ENCODE measurements at regions of chr15 and their contacts with region 1.

Region 1: DNA sequence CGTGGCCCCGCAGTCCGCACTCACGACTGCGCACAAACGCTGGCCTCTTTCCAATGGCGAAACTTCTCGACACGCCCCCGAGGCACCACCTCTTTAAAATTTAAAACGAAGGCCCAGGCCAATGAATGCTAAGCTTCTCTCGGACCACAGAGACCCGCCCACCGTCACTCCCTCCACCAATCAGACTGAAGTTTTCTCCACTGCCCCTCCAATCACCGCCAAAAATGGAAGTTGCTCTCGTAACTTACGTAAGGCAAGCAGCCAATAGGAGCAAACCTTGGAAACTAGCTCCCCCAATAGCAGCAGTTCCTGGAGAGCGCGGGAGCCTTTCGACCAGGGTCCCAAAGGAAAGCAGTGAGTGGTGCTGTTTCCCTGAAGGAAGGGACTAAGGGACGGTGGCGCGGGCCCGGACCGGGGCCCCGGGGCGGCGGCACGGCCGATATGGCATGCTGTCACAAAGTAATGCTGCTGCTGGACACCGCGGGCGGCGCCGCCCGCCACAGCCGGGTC is at the start of gene TICRR:
- DNase-seq: peak; percentile 100
- H3K4me3 ChIP-seq: peak within 1 kb of the TSS; percentile 82
- H3K27ac ChIP-seq: peak within 1 kb of the TSS; percentile 90
- H3K4me1 ChIP-seq: peaks cover 12% of the 10 kb centered on the region
- H3K27me3 ChIP-seq: no peaks in the 10 kb centered on the region
- CTCF ChIP-seq: no peak
- total RNA-seq, gene TICRR: 55.7 and 56.5 TPM in 2 replicates

Region 2: DNA sequence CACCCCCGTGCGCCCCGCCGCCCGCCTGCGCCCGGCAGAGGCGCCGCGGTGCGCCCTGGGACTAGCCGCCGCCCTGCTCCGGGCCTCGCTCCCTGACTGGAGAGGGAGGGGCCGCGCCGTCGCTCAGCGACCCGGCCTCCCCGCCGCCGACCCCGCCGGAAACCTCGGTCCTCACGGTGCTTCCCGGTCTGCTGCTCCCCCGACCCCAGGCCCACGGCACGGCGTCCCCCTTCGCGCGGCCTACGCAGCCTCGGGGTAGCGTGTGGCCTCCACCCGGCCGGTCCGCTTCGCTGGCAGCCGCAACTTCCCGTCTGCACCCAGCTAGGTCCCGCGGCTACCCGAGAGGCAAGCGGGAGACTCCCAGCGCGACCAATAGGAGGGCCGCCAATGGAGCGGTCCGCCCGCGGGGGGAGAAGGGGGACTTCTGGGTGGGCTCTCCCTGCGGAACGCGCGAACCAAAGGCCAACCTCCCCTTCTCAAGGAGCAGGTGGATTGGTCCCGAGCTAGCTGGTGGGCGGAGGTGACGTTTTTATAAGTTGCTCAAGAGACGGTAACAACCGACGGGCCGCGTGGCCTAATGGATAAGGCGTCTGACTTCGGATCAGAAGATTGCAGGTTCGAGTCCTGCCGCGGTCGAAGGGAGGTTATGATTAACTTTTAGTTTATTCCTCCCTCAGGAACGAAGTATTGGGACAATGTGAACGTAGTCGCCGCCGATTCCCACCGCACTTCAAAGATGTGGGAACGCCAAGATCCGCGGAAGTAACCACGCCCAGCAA is 240.5 kb before region 1 on chr15 and contains the start of gene POLG:
- CTCF ChIA-PET with region 1: no interaction called
- POLR2A ChIA-PET with region 1: interaction called, 3 read pairs
- intact Hi-C with region 1: loop called (anchors 5 kb)
- DNase-seq: peak; percentile 100
- H3K4me3 ChIP-seq: peak within 1 kb of the TSS; percentile 78
- H3K27ac ChIP-seq: peak within 1 kb of the TSS; percentile 88
- H3K4me1 ChIP-seq: peaks cover 32% of the 10 kb centered on the region
- H3K27me3 ChIP-seq: no peaks in the 10 kb centered on the region
- CTCF ChIP-seq: no peak
- total RNA-seq, gene POLG: 63.5 and 166 TPM in 2 replicates

Region 3: GRCh38 chr15:89614164-89614563 is 39.0 kb after region 1 on chr15:
- CTCF ChIA-PET with region 1: no interaction called
- POLR2A ChIA-PET with region 1: no interaction called
- intact Hi-C with region 1: loop called (anchors 5 kb)
- DNase-seq: no peak
- H3K4me3 ChIP-seq: no peak overlapping the region
- H3K27ac ChIP-seq: no peak overlapping the region
- H3K4me1 ChIP-seq: no peaks in the 10 kb centered on the region
- H3K27me3 ChIP-seq: no peaks in the 10 kb centered on the region
- CTCF ChIP-seq: no peak

Region 4: GRCh38 chr15:89625716-89626115 is 50.5 kb after region 1 on chr15:
- CTCF ChIA-PET with region 1: no interaction called
- POLR2A ChIA-PET with region 1: no interaction called
- intact Hi-C with region 1: no loop called
- DNase-seq: no peak
- H3K4me3 ChIP-seq: no peak overlapping the region
- H3K27ac ChIP-seq: no peak overlapping the region
- H3K4me1 ChIP-seq: no peaks in the 10 kb centered on the region
- H3K27me3 ChIP-seq: no peaks in the 10 kb centered on the region
- CTCF ChIP-seq: no peak

Region 5: GRCh38 chr15:89704411-89704810 is 129.2 kb after region 1 on chr15:
- CTCF ChIA-PET with region 1: no interaction called
- POLR2A ChIA-PET with region 1: interaction called, 11 read pairs
- intact Hi-C with region 1: no loop called
- DNase-seq: no peak
- H3K4me3 ChIP-seq: no peak overlapping the region
- H3K27ac ChIP-seq: no peak overlapping the region
- H3K4me1 ChIP-seq: no peaks in the 10 kb centered on the region
- H3K27me3 ChIP-seq: peaks cover 6% of the 10 kb centered on the region
- CTCF ChIP-seq: no peak

Region 6: DNA sequence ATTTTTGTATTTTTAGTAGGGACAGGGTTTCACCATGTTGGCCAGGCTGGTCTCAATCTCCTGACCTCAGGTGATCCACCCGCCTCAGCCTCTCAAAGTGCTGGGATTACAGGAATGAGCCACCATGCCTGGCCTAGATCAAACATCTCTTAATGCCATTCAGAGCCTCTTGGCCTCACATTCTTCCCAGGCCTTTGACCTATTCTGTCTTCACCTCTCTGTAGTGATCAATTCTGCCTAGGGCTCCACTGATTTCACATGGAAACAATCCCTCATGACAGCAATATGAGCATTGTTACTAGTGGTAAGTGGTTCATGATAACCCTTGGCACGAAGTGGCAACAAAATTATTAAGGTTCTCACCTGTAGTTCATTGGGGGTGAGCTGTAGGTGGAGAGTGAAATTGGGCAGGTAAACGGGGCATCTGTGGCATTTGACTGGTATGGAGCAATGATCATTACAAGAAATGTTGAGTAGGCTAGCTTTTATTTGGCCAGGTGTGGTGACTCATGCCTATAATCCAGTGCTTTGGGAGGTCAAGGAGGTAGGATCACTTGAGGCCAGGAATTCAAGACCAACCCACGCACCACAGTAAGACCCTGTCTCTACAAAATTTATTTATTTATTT is 342.4 kb after region 1 on chr15:
- CTCF ChIA-PET with region 1: no interaction called
- POLR2A ChIA-PET with region 1: no interaction called
- intact Hi-C with region 1: no loop called
- DNase-seq: no peak
- H3K4me3 ChIP-seq: no peak overlapping the region
- H3K27ac ChIP-seq: no peak overlapping the region
- H3K4me1 ChIP-seq: peaks cover 7% of the 10 kb centered on the region
- H3K27me3 ChIP-seq: no peaks in the 10 kb centered on the region
- CTCF ChIP-seq: no peak

Measured in A673 (cell line).